Sigmoid colon (tissue), 7 donors: ENCODE measurements at regions of chr2 and their contacts with region 1.

Region 1: DNA sequence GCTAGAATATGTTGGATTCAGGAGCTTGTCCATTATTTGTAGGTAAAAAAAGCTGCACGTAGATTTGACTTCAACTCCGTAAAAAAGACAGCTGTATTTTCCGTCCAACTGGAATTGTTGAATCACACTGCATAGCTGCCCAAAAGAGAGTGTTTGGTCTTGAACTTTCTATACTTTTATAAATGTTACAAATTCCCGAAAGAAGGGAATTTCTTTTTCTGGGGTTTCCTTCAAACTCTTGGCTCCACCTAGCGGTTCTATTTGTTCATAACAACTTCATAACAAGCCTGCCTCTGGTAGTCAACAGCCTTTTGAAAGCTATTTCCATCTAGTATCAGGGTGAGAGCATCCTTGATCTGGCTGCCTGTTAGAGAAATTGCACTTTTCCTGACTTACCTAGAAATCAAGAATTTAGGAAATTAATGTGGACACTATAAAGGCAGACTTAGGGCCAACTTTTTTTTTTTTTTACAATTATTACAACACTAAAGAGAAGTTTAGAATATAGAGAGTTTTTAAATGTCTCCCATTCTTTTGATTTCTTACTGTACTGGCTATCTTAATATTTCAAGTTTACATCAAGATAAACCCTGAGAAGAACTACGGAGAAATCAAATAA is 48.1 kb downstream of the TMEM185B start:
- DNase-seq: no peak
- H3K4me3 ChIP-seq: peak overlapping the region in 2 of 4 donors; percentile 19 to 23
- H3K27ac ChIP-seq: peak overlapping the region in 2 of 4 donors; percentile 8 to 20
- H3K4me1 ChIP-seq: peaks cover 0 to 6% (median 0%) of the 10 kb centered on the region in 4 donors
- H3K27me3 ChIP-seq: no peaks in the 10 kb centered on the region
- CTCF ChIP-seq: peak; percentile 26 to 73 (median 70)
- EP300 ChIP-seq: no peak
- POLR2A ChIP-seq: no peak

Region 2: DNA sequence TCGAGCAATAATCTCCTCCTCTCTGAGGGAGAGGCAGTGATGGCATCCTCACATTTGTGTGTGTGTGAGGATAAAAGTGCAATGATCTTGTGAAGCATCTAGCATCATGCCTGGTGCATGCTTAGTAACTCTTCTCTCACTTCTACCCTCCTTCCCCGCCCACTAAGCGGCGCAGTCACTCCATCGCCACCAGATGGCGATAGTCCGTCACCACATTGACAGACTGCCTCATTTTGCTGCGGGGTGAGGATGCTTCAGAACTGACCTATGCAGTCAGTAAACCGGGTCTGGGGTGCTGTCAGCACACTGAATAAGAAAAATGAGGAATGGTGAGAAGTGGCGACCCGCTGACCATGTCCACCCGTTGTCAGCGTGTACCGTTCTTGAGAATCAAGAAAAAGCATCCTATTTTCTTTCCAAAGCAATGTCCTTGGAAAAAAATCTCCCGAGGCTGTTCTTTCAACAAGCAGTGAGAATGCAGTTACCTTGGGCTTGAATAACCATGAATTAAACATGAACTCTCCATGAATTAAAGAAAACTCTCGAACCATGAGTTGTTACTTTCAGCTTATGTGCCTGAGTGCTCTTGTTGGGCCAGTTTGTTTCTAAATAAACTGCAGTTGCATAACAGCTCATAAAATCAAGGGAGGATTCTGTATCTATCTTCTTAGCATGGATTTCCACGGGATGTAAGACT is 533.4 kb before region 1 on chr2:
- intact Hi-C with region 1: loop called (anchors 5 kb)
- DNase-seq: peak; percentile 73
- H3K4me3 ChIP-seq: no peak overlapping the region
- H3K27ac ChIP-seq: no peak overlapping the region
- H3K4me1 ChIP-seq: peaks cover 0 to 3% (median 0%) of the 10 kb centered on the region in 4 donors
- H3K27me3 ChIP-seq: no peaks in the 10 kb centered on the region
- CTCF ChIP-seq: peak; percentile 15 to 93 (median 74)
- EP300 ChIP-seq: no peak
- POLR2A ChIP-seq: no peak

Region 3: GRCh38 chr2:119702918-119703401 is 472.1 kb before region 1 on chr2:
- intact Hi-C with region 1: loop called (anchors 2 kb)
- DNase-seq: peak; percentile 83
- H3K4me3 ChIP-seq: no peak overlapping the region
- H3K27ac ChIP-seq: no peak overlapping the region
- H3K4me1 ChIP-seq: no peaks in the 10 kb centered on the region
- H3K27me3 ChIP-seq: no peaks in the 10 kb centered on the region
- CTCF ChIP-seq: peak; percentile 48 to 97 (median 90)
- EP300 ChIP-seq: no peak
- POLR2A ChIP-seq: no peak

Region 4: DNA sequence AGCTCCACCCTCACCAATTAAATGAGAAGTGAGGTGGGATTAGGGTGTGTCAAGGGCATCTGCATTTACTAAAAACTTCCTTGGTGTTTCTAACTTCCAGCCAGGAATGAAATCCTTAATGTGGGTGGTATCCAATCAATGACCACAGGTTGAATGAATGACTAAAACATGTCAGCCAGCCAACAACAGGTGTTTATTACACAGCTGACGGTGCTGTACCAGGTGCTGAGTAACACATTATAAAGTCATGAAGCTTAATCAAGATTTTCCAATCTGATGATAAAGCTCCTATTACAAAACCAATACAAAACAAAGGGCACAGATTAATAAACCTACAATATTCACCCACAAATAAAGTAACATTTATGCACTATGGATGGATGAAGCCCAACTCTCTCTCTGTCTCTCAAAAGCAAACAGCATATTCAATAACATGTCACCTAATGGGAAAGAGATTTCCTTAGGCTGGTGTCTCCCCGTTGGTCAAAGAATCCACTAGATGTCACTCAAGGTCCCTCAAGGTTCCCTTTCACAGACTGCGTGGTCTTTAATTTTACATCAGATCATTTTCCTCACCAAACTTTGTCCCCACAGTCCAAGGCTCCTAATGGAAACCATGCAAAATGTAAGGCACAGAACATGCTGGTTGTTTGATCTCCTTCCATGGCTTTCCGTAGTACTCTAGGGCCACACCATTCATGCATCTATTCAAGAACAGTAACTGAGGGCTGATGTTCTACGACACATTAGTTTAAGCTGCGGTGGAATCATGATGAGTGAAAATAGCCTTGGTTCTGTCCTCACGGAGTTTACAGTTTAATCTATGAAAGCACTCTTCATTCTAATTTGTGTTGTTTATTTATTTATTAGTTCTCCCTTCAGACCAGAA is 421.8 kb before region 1 on chr2:
- intact Hi-C with region 1: loop called (anchors 2 kb)
- DNase-seq: no peak
- H3K4me3 ChIP-seq: no peak overlapping the region
- H3K27ac ChIP-seq: no peak overlapping the region
- H3K4me1 ChIP-seq: peaks cover 0 to 5% (median 0%) of the 10 kb centered on the region in 4 donors
- H3K27me3 ChIP-seq: no peaks in the 10 kb centered on the region
- CTCF ChIP-seq: peak in 3 of 4 experiments; percentile 23 to 59 (median 33)
- EP300 ChIP-seq: no peak
- POLR2A ChIP-seq: no peak

Region 5: GRCh38 chr2:119914266-119914665 is 260.8 kb before region 1 on chr2:
- intact Hi-C with region 1: no loop called
- DNase-seq: no peak
- H3K4me3 ChIP-seq: no peak overlapping the region
- H3K27ac ChIP-seq: no peak overlapping the region
- H3K4me1 ChIP-seq: no peaks in the 10 kb centered on the region
- H3K27me3 ChIP-seq: no peaks in the 10 kb centered on the region
- CTCF ChIP-seq: no peak
- EP300 ChIP-seq: no peak
- POLR2A ChIP-seq: no peak

Region 6: DNA sequence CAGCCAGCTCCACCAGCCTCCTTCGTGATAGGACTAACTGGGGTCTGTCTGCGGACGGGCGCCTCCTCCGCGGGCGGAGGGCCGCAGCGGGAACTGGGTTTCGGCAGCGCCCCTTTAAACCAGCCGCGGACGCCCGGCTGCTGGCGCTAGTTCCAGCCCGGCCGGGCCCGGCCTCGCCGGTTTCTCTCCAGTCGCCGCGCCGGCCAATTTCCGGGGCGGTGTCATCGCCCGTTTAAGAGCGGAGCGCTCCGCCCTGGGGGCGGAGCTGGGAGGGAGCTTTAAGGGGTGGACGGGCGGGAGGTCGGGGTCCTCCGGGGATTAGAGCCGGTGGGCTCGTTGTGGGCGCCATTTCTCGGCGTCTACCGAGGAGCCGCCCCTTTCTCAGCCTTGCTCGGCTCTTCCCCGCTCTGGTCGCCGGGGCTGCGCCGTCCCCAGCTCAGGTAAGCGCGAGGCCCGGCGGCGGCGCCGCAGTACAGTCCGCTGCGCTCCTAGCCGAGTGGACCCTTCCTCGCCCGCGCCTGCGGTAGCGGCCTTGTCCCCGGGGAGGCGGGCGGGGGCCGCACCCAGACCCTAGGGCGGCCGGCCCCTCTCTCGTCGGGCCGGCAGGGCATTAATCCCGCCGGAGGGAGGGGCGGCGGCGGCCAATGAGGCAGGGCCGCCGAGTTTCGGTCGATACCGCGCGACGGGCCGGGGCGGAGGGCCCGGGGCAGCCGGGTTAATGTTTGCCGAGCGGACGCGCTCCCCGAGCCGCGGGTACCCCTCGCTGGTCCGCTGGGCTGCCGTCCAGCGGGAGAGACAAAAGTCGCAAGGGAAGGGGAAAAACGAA is 162.1 kb before region 1 on chr2 and contains the start of gene EPB41L5:
- intact Hi-C with region 1: loop called (anchors 10 kb)
- DNase-seq: peak; percentile 94
- H3K4me3 ChIP-seq: peak within 1 kb of the TSS; percentile 75 to 92 (median 88)
- H3K27ac ChIP-seq: peak within 1 kb of the TSS; percentile 85 to 91 (median 90)
- H3K4me1 ChIP-seq: peaks cover 0 to 18% (median 11%) of the 10 kb centered on the region in 4 donors
- H3K27me3 ChIP-seq: no peaks in the 10 kb centered on the region
- CTCF ChIP-seq: no peak
- EP300 ChIP-seq: no peak
- POLR2A ChIP-seq: peak; percentile 44 to 54
- total RNA-seq, gene EPB41L5: 16.3 to 24.3 (median 20.3) TPM